MCF 10A (cell line): ENCODE measurements at regions of chr2 and their contacts with region 1.

Region 1: GRCh38 chr2:37672104-37672869 is 845 bp upstream of the CDC42EP3 start:
- DNase-seq: peak; percentile 86
- H3K4me3 Mint-ChIP-seq: peak overlapping the region; percentile 92
- H3K27ac Mint-ChIP-seq: peak overlapping the region; percentile 77
- H3K4me1 Mint-ChIP-seq: peaks cover 35% of the 10 kb centered on the region
- H3K27me3 Mint-ChIP-seq: no peaks in the 10 kb centered on the region
- CTCF ChIP-seq: no peak

Region 2: GRCh38 chr2:37344453-37345361 is 327.6 kb before region 1 on chr2 and contains the start of gene QPCT:
- CTCF ChIA-PET with region 1: no interaction called
- POLR2A ChIA-PET with region 1: no interaction called
- intact Hi-C with region 1: no loop called
- DNase-seq: no peak
- H3K4me3 Mint-ChIP-seq: no peak within 1 kb of the TSS
- H3K27ac Mint-ChIP-seq: peak within 1 kb of the TSS; percentile 76
- H3K4me1 Mint-ChIP-seq: peaks cover 10% of the 10 kb centered on the region
- H3K27me3 Mint-ChIP-seq: no peaks in the 10 kb centered on the region
- CTCF ChIP-seq: no peak
- total RNA-seq, gene QPCT: not detected in 2 replicates

Region 3: DNA sequence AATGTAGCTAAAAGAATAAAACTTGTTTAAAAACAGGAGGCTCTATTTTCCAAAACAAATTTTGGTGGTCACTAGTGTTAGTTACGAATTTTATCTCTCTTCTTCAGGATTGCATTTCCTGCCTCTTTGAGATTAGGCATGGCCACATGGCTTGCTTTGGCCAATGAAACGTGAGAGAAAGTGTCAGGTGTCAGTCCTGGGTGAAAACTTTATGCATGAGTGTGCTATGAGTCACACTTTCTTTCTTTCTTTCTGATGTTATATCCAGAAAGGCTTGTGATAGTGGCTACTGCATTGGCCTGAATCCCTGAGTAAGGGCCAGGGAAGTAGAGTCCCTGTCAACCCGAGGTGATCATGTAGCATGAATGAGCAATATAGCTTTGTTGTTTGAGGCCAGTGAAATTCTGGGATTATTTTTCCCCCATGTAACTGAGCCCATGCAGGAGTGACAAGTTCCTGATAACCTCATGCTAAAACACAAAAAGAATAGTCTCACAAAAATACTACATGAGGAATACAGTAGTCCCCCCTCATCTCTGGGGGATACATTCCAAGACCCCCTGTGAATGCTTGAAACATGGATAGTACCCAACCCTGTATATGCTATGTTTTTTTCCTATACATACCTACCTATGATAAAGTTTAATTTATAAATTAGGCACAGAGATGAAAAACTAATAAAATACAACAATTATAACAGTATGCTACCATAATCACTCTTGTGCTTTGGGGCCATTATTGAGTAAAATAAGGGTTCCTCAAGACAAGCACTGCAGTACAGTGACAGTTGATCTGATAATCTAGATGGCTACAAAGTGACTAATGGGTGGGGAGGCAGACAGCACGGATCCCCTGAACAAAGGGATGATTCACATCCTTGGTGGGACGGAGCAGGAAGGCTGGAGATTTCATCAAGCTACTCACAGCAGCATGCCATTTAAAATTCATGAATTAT is 110.4 kb before region 1 on chr2:
- CTCF ChIA-PET with region 1: no interaction called
- POLR2A ChIA-PET with region 1: interaction called, 12 read pairs
- intact Hi-C with region 1: loop called (anchors 2 kb)
- DNase-seq: peak; percentile 93
- H3K4me3 Mint-ChIP-seq: no peak overlapping the region
- H3K27ac Mint-ChIP-seq: peak overlapping the region; percentile 87
- H3K4me1 Mint-ChIP-seq: peaks cover 26% of the 10 kb centered on the region
- H3K27me3 Mint-ChIP-seq: no peaks in the 10 kb centered on the region
- CTCF ChIP-seq: no peak

Region 4: DNA sequence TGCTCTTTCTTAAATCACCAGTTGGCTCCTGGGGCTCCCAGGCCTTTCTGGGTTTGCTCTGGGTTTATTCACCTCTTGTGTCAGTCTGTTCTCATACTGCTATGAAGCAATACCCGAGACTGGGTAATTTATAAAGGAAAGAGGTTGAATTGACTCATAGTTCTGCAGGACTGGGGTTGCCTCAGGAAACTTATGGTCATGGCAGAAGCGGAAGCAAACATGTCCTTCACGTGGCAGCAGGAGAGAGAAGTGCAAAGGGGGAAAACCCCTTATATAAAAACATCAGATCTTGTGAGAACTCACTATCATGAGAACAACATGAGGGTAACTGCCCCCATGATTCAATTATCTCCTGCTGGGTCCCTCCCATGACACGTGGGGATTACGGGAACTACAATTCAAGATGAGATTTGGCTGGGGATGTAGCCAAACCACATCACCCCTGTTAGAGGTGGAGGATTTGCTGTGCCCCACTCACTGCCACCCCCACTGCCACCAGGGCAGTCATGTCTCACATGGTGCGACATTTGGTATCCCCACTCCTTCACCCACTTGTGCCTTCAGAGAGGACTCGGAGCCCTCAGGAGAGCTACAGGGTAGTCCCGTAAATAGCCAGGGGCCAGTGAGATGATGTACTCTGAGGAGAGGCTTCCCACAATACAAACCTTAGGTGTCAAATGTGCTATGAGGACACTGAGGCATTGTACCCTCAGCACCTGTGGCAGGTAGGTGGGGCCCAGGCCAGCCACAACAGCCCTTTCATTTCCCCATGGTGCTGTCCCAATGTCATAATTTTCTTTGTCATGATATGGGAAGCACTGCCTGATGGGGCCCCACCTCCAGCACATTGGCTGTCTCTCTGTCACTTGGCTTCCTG is 36.5 kb before region 1 on chr2:
- CTCF ChIA-PET with region 1: interaction called, 4 read pairs
- POLR2A ChIA-PET with region 1: interaction called, 3 read pairs
- intact Hi-C with region 1: loop called (anchors 2 kb)
- DNase-seq: peak; percentile 92
- H3K4me3 Mint-ChIP-seq: no peak overlapping the region
- H3K27ac Mint-ChIP-seq: peak overlapping the region; percentile 75
- H3K4me1 Mint-ChIP-seq: peaks cover 38% of the 10 kb centered on the region
- H3K27me3 Mint-ChIP-seq: no peaks in the 10 kb centered on the region
- CTCF ChIP-seq: no peak

Region 5: DNA sequence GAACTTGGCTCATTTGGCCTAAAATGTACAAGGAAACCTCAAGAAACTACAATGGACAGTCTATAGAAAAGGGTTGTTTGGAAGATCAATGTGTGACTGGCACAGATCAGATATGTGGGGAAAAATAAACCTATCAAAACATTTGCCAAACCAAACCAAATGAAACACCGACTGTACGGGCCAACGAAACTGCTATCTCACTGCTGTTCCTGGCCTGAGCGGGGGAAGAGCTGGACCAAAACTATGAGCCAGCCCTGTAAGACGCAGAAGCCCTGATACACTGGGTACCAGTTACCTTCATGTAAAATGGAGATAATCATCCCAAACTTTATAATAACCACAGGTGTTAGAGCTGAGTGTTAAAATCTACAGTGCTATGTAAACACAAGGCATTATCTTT is 12.6 kb before region 1 on chr2:
- CTCF ChIA-PET with region 1: interaction called, 12 read pairs
- POLR2A ChIA-PET with region 1: interaction called, 90 read pairs
- intact Hi-C with region 1: no loop called
- DNase-seq: no peak
- H3K4me3 Mint-ChIP-seq: no peak overlapping the region
- H3K27ac Mint-ChIP-seq: peak overlapping the region; percentile 10
- H3K4me1 Mint-ChIP-seq: peaks cover 63% of the 10 kb centered on the region
- H3K27me3 Mint-ChIP-seq: no peaks in the 10 kb centered on the region
- CTCF ChIP-seq: no peak

Region 6: DNA sequence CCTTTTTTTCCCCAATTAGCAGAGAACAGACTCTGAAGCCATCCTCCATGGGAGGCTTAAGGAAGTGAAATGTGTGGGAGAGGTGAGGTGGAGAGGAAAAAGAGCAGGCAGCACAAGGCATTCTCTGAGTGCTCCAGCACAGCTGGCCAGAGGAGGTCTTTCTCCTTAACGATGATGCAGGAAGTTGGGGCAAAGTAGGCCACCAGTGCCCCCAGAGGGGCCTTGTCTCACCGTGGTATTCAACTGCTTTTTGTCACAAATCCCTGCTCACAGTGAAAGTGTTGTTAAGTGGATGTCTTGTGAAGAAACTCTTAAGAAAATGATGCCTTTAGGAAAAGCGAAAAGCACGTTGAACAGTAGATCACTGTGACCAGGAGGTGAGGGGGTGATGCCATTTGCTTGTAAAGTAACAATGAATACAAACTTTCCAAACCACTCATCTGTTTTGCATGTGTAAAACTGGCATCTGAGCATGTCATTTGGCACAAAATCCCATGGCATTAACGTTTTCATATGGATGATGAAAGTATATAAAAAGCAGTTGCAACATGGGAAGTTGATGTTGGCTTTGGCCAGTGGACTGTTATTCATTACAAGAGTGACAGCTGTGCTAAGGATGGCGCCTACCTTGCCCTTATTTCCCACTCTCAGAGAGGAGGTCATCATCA is 48.4 kb after region 1 on chr2:
- CTCF ChIA-PET with region 1: no interaction called
- POLR2A ChIA-PET with region 1: no interaction called
- intact Hi-C with region 1: no loop called
- DNase-seq: peak; percentile 85
- H3K4me3 Mint-ChIP-seq: no peak overlapping the region
- H3K27ac Mint-ChIP-seq: peak overlapping the region; percentile 40
- H3K4me1 Mint-ChIP-seq: peaks cover 5% of the 10 kb centered on the region
- H3K27me3 Mint-ChIP-seq: no peaks in the 10 kb centered on the region
- CTCF ChIP-seq: no peak

Region 7: GRCh38 chr2:37802899-37803379 is 130.7 kb after region 1 on chr2:
- CTCF ChIA-PET with region 1: interaction called, 3 read pairs
- POLR2A ChIA-PET with region 1: no interaction called
- intact Hi-C with region 1: loop called (anchors 2 kb)
- DNase-seq: peak; percentile 74
- H3K4me3 Mint-ChIP-seq: no peak overlapping the region
- H3K27ac Mint-ChIP-seq: peak overlapping the region; percentile 86
- H3K4me1 Mint-ChIP-seq: peaks cover 27% of the 10 kb centered on the region
- H3K27me3 Mint-ChIP-seq: no peaks in the 10 kb centered on the region
- CTCF ChIP-seq: no peak

Region 8: GRCh38 chr2:37832590-37833197 is 160.4 kb after region 1 on chr2:
- CTCF ChIA-PET with region 1: interaction called, 3 read pairs
- POLR2A ChIA-PET with region 1: no interaction called
- intact Hi-C with region 1: loop called (anchors 1 kb)
- DNase-seq: peak; percentile 89
- H3K4me3 Mint-ChIP-seq: no peak overlapping the region
- H3K27ac Mint-ChIP-seq: no peak overlapping the region
- H3K4me1 Mint-ChIP-seq: peaks cover 5% of the 10 kb centered on the region
- H3K27me3 Mint-ChIP-seq: no peaks in the 10 kb centered on the region
- CTCF ChIP-seq: peak; percentile 79